AG04449 (cell line): ENCODE measurements at regions of chr11 and their contacts with region 1.

Region 1: DNA sequence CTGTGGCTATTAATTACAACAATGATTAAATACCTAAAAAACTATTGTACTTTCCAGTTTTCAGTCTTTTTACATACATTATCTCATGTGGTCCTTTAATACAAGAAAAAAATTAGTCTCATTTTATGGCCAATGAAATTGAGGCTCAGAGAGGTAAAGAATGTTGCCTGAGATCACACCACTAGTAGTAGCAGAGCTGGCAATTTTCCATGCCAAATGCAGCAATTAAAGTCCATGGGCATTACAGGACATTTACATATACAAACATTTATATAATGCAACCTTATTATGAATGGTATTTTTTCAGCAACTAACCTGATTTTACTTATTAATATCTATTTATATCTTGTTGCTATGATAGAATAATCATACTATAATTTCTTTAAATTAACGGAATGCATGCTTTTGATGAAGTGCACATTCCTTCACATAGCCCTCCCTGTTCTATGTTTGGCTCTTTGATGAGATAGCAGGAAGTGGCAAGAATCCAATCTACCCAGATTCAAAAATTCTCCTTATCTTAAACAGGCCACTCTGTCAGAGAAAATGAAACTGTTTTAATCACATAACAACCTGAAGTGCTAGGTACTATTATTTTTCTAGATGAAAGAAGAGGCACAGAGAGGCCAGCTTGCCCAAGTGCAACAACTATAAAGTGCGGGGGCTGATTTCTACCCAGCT is 120.9 kb upstream of the LDLRAD3 start:
- DNase-seq: no peak
- H3K4me3 ChIP-seq: no peak overlapping the region
- CTCF ChIP-seq: no peak

Region 2: GRCh38 chr11:35485656-35486322 is 337.2 kb before region 1 on chr11:
- CTCF ChIA-PET with region 1: interaction called, 12 read pairs
- POLR2A ChIA-PET with region 1: no interaction called
- DNase-seq: no peak
- H3K4me3 ChIP-seq: no peak overlapping the region
- CTCF ChIP-seq: peak; percentile 90

Region 3: DNA sequence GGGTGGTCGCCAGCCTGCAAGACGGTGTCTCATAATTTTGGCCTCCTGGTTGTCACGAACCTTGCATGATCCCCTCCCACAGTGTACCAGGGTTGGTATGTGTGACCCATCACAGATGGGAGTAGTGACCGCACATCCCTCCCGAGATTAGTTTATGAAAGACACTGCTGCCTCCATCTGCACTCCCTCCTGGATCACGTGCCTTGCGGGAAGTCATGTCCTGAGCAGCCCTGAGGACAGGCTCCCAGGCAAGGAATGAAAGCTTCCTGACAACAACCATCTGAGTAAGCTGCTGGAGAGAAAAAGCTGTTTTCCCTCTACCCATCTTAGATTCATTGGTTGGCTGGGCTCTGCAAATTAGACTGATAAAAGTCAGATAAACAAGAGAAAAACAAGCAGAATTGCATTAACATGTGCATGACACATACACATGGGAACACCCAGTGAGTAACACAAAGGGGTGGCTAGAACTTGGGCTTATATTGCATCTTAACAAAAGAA is 283.1 kb before region 1 on chr11:
- CTCF ChIA-PET with region 1: no interaction called
- POLR2A ChIA-PET with region 1: no interaction called
- DNase-seq: no peak
- H3K4me3 ChIP-seq: no peak overlapping the region
- CTCF ChIP-seq: no peak

Region 4: GRCh38 chr11:35629914-35630313 is 193.0 kb before region 1 on chr11:
- CTCF ChIA-PET with region 1: interaction called, 12 read pairs
- POLR2A ChIA-PET with region 1: no interaction called
- DNase-seq: peak; percentile 98
- H3K4me3 ChIP-seq: no peak overlapping the region
- CTCF ChIP-seq: no peak

Region 5: DNA sequence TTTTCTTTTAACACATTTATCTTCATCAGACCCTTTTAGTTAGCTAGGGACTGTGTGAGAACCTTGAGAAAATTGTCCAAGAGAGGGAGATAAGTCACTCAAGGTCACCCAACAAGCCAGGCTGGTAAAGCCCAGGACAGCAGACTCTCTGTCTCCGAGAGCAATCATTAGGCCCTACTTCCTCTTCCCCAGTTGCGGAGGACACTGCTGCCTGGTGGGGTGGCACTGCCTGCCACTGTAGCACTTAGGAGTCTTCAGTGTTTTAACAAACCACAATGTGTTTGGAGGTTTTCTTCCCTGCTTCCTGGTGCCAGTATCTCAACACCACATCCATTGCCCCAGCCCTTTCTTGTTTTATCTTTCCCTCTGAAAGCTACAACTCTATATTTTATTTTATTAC is 11.2 kb before region 1 on chr11:
- CTCF ChIA-PET with region 1: interaction called, 197 read pairs
- POLR2A ChIA-PET with region 1: no interaction called
- DNase-seq: no peak
- H3K4me3 ChIP-seq: no peak overlapping the region
- CTCF ChIP-seq: no peak

Region 6: DNA sequence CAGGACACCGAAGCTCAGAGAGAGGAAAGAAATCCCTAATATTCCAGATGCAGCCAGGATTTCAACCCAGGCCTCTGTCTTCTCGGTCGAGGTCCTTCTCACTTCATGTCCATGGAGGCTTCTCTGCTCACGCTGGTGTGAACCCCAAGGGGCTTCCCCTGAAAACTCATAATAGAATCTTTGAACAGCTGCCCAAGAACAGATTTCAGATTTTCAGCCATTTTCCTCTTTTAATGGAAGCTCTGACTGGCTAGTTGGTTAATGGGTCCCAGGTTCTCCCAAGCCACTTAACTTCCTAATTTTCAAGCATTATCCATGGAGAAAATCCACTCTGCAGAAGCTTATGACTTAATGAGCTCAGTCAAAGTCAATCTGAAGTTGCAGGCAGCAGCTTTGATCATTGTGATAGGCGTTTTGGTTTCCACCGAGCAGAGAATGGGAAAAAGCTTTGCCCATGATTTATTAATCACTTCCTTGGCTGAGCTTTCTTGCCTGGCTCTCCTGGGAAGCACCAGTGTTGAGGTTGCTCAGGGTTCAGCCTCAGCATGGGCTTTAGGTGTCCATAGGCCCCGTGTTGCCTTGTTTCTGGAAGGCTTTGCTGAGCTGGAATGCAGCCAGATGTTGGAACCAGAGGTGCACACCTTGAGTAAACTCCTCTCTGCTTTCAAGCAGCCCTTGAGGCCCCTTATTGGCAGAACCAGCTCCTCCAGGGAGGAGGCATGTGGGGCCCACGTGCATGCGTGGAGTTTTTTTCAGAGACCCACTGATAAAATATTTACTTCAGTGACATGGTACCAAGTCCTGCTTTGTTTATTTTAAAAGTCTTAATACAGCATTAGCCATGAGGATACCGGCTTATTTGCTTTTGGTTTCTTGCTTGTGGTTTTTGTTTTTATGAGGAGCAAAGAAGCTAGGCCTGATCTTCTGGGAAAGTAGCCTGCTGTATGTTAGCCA is 146.4 kb after region 1 on chr11:
- CTCF ChIA-PET with region 1: interaction called, 10 read pairs
- POLR2A ChIA-PET with region 1: no interaction called
- DNase-seq: no peak
- H3K4me3 ChIP-seq: no peak overlapping the region
- CTCF ChIP-seq: no peak

Region 7: DNA sequence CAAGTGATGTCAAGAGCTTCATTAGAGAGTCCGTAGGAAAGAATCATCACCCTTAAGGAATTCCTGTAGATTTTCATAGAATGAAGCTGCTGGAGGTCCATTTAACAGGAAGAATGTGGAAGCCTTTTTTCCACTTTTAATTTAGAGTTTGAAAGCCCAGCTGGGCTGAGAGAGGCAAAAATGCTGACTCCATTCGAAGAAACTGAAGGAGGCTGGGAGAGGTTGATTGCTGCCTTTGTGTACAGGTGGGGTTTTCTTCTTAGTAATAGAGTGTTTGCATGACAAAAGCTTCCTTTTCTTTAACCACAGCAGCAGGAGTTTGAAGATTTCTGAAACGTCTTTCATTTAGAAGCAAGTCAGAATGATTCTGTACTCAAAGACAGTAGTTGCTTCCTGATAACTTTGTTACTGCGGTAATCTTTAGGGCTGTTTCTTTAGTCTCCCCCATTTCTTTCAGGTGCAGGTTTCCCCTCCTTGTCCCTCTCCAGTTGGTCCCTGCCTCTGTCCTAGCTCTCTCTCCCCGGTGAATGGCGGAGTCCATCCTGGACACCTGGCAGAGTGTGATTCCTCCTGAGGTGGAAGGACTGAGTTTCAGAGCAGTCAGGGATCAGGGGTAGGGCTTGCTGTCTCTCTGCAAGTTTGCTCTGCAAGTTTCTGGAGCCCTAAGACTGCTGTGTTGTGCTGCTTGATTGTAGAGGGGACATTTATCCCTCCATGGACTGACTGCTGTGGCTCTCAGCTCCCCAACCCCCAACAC is 287.1 kb after region 1 on chr11:
- CTCF ChIA-PET with region 1: interaction called, 10 read pairs
- POLR2A ChIA-PET with region 1: no interaction called
- DNase-seq: no peak
- H3K4me3 ChIP-seq: no peak overlapping the region
- CTCF ChIP-seq: no peak

Region 8: DNA sequence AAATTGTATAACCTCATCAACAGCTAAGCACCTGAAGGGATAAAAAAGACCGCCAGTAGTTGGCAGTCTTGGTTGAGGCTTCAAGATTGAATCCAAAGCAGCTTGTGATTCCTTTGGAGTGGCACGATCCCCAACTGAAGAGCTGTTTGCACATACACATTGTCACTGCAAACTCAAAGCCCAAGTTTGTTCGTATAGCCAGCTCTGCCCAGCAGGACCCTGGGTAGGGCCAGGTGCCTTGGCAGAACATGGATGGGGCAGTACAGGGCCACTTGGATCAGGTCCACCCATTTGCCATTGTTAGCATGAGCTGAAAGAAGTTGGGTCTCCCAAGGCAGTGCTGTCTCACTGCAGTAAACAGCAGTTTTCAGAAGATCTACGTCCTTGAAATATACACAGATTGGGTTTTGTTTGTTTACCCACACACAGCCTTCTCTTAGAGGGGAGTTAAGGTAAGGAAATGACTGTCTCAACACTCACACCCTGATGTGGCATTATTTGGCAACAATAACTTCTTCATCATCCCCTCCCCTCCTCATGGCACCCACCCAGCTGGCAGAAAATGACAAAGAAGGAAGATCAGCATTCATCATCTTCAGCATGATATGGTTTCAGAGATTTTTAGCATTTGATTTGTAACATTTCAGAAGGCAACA is 333.3 kb after region 1 on chr11:
- CTCF ChIA-PET with region 1: interaction called, 19 read pairs
- POLR2A ChIA-PET with region 1: no interaction called
- DNase-seq: no peak
- H3K4me3 ChIP-seq: no peak overlapping the region
- CTCF ChIP-seq: no peak